ENCODE measurements at regions of chr9 and their contacts with region 1.

Region 1: GRCh38 chr9:35116898-35117551 is 1.4 kb upstream of the ATOSB start:
- DNase-seq: peak; percentile 93
- ATAC-seq: peak; percentile 54
- H3K4me3 ChIP-seq: peak overlapping the region; percentile 55 to 72 (median 59)
- H3K4me3 Mint-ChIP-seq: peak overlapping the region; percentile 98
- H3K27ac ChIP-seq: peak overlapping the region in 1 of 2 donors; percentile 93
- H3K27ac Mint-ChIP-seq: peak overlapping the region; percentile 97
- H3K4me1 ChIP-seq: peaks cover 30 to 37% of the 10 kb centered on the region in 2 donors
- H3K4me1 Mint-ChIP-seq: peaks cover 40% of the 10 kb centered on the region
- H3K27me3 ChIP-seq: no peaks in the 10 kb centered on the region
- H3K27me3 Mint-ChIP-seq: peaks cover 3% of the 10 kb centered on the region
- CTCF ChIP-seq: peak; percentile 94

Region 2: GRCh38 chr9:34899535-34900158 is 217.4 kb before region 1 on chr9:
- CTCF ChIA-PET with region 1: interaction called, 18 read pairs
- POLR2A ChIA-PET with region 1: no interaction called
- intact Hi-C with region 1: loop called (anchors 1 kb)
- DNase-seq: peak; percentile 85
- ATAC-seq: peak; percentile 97
- H3K4me3 ChIP-seq: no peak overlapping the region
- H3K4me3 Mint-ChIP-seq: no peak overlapping the region
- H3K27ac ChIP-seq: no peak overlapping the region
- H3K27ac Mint-ChIP-seq: no peak overlapping the region
- H3K4me1 ChIP-seq: no peaks in the 10 kb centered on the region
- H3K4me1 Mint-ChIP-seq: no peaks in the 10 kb centered on the region
- H3K27me3 ChIP-seq: peaks cover 0 to 11% (median 9%) of the 10 kb centered on the region in 4 experiments
- H3K27me3 Mint-ChIP-seq: peaks cover 31% of the 10 kb centered on the region
- CTCF ChIP-seq: peak; percentile 94

Region 3: DNA sequence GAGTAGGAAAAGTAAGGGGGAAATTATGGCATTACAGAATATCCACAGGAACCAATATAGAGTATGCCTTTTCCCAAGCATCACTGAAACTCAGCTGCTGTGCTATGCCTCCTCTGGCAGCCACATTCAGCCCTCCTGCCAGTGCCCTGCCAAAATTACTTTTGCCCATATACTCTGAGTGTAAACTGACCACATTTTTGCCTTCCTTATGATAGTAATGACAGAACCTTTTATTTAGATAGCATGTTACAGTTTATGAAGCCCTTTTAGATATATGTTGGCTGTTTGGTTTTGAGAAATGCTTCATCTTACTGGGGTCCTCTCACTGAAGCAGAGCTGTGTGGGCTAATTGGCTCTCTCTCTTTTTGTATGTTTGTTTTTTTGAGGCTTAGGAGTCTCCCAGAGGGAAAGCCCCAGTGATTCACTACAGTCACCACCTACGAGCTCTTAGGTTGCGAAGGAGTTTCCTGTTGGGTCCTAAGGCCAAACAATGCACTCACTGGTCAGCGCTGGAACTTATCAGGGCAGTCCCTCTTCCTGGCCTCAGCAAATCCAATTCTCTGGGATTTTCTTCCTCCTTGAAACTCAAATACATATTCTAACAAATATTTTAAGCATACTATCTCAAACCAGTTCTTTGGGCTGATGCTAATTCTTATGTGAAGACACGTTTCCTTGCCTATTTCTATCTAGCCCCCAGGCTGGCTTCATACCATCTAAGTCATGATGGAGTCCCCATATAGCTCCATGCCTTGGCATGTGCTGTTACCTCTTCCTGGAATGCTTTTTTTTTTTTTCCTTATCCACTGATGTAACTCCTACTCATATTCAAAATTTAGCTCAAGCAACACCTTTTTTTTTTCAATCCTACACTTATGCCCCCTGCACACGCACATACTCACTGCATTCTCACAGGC is 155.2 kb before region 1 on chr9:
- CTCF ChIA-PET with region 1: no interaction called
- POLR2A ChIA-PET with region 1: no interaction called
- intact Hi-C with region 1: no loop called
- DNase-seq: no peak
- ATAC-seq: no peak
- H3K4me3 ChIP-seq: no peak overlapping the region
- H3K4me3 Mint-ChIP-seq: no peak overlapping the region
- H3K27ac ChIP-seq: no peak overlapping the region
- H3K27ac Mint-ChIP-seq: no peak overlapping the region
- H3K4me1 ChIP-seq: peaks cover 9 to 10% of the 10 kb centered on the region in 2 donors
- H3K4me1 Mint-ChIP-seq: peaks cover 2% of the 10 kb centered on the region
- H3K27me3 ChIP-seq: peaks cover 0 to 62% (median 57%) of the 10 kb centered on the region in 4 experiments
- H3K27me3 Mint-ChIP-seq: peaks cover 65% of the 10 kb centered on the region
- CTCF ChIP-seq: no peak

Region 4: GRCh38 chr9:35079426-35080341 is 37.3 kb before region 1 on chr9 and contains the start of gene FANCG:
- CTCF ChIA-PET with region 1: interaction called, 4 read pairs
- POLR2A ChIA-PET with region 1: interaction called, 5 read pairs
- intact Hi-C with region 1: loop called (anchors 1 kb)
- DNase-seq: peak; percentile 88
- ATAC-seq: peak; percentile 93
- H3K4me3 ChIP-seq: peak within 1 kb of the TSS; percentile 75 to 93 (median 82)
- H3K4me3 Mint-ChIP-seq: peak within 1 kb of the TSS; percentile 92
- H3K27ac ChIP-seq: peak within 1 kb of the TSS; percentile 25 to 50
- H3K27ac Mint-ChIP-seq: peak within 1 kb of the TSS; percentile 84
- H3K4me1 ChIP-seq: peaks cover 12 to 16% of the 10 kb centered on the region in 2 donors
- H3K4me1 Mint-ChIP-seq: peaks cover 18% of the 10 kb centered on the region
- H3K27me3 ChIP-seq: no peaks in the 10 kb centered on the region
- H3K27me3 Mint-ChIP-seq: no peaks in the 10 kb centered on the region
- CTCF ChIP-seq: no peak
- total RNA-seq, gene FANCG: 38.9 and 40.1 TPM in 2 replicates

Region 5: DNA sequence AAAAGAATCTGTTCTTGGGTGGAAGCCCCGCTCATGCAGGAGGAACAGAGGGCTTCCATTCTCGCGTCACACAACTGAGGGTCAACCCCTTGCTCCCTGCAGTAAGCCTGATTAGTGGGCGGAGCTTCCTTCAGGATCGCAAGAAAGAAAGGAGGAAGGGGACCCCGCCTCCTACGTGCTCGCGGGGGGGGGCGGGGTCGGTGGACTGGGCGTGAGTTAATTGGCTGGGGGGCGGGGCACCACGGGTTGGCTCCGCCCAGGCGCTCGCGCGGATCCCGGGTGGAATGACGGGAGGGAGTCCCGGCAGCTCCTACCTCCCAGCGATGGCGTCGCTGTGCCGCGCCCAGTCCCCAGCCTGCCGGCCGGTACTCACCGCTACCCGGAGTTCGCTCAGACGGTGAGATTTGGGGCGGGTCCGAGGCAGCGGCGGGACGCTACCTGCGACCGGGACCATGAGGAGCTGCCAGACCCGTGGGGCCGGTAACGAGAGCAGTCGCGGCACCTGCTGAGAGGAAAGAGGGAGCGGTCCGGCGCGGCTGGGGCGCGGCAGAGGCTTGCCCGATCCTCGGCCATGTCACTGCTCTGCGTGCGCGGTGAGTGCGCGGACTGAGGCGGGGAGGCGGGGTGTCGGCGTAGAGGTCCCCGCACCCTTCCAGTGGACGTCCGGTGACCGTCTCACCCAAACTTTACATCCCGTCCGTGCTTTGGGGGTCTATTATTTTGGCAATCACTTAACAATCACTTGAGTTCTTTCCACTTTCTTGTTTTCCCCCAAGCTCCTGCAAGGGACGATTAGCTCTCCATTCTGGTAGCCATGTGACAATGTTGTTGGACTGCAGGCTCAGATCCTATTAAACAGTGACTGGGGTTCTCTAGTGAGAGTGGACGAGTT is 44.9 kb after region 1 on chr9 and contains the start of gene UNC13B:
- CTCF ChIA-PET with region 1: interaction called, 5 read pairs
- POLR2A ChIA-PET with region 1: no interaction called
- intact Hi-C with region 1: loop called (anchors 2 kb)
- DNase-seq: peak; percentile 83
- ATAC-seq: peak; percentile 97
- H3K4me3 ChIP-seq: peak within 1 kb of the TSS; percentile 39 to 89 (median 78)
- H3K4me3 Mint-ChIP-seq: peak within 1 kb of the TSS; percentile 89
- H3K27ac ChIP-seq: no peak within 1 kb of the TSS
- H3K27ac Mint-ChIP-seq: peak within 1 kb of the TSS; percentile 61
- H3K4me1 ChIP-seq: peaks cover 16 to 30% of the 10 kb centered on the region in 2 donors
- H3K4me1 Mint-ChIP-seq: peaks cover 28% of the 10 kb centered on the region
- H3K27me3 ChIP-seq: peaks cover 0 to 9% (median 4%) of the 10 kb centered on the region in 4 experiments
- H3K27me3 Mint-ChIP-seq: peaks cover 6% of the 10 kb centered on the region
- CTCF ChIP-seq: no peak
- total RNA-seq, gene UNC13B: 0.25 and 0.32 TPM in 2 replicates

Region 6: GRCh38 chr9:35179347-35180287 is 62.6 kb after region 1 on chr9:
- CTCF ChIA-PET with region 1: no interaction called
- POLR2A ChIA-PET with region 1: no interaction called
- intact Hi-C with region 1: no loop called
- DNase-seq: no peak
- ATAC-seq: no peak
- H3K4me3 ChIP-seq: no peak overlapping the region
- H3K4me3 Mint-ChIP-seq: no peak overlapping the region
- H3K27ac ChIP-seq: no peak overlapping the region
- H3K27ac Mint-ChIP-seq: no peak overlapping the region
- H3K4me1 ChIP-seq: no peaks in the 10 kb centered on the region
- H3K4me1 Mint-ChIP-seq: no peaks in the 10 kb centered on the region
- H3K27me3 ChIP-seq: peaks cover 0 to 3% (median 0%) of the 10 kb centered on the region in 4 experiments
- H3K27me3 Mint-ChIP-seq: peaks cover 7% of the 10 kb centered on the region
- CTCF ChIP-seq: no peak

Region 7: DNA sequence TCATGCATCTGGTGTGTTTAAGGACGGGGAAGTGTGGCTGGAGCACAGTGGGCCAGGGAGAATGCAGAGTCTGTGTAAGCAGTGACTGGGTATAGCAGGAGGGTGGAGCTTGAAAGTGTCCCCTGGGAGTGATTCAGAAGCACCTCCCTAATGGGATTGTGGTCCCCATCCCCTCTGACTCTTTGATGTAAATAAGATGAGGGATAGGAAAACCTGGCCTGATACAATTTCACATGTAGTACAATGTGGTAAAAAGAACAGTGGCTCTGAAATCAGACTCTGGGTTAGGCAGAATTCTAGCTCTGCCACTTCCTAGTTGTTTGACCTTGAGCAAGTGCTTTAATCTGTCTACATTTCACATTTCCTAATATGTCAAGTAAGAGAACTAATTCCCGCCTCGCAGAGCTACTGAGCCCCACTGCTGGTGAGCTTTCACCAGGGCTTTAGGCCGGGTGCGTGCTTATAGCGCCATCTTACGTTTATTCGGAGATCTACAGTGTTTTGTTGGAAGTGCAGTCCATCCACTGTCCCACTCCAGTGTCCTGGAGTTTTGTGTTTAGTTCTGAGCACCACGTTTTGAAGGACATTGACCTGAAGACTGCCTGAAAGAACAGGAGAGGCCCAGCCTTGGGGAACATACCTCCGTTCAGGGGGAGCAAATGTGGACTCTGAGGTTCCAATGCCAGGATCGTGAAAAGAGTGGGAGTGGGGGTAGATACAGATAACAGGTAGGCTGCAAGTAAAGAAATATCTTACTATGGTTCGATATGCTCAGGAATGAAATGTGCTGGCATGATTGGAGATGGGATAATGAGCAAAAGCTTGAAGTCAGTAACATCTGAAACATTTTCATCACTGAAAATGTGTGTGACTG is 436.9 kb after region 1 on chr9:
- CTCF ChIA-PET with region 1: interaction called, 7 read pairs
- POLR2A ChIA-PET with region 1: no interaction called
- intact Hi-C with region 1: loop called (anchors 5 kb)
- DNase-seq: peak; percentile 37
- ATAC-seq: peak; percentile 36
- H3K4me3 ChIP-seq: no peak overlapping the region
- H3K4me3 Mint-ChIP-seq: no peak overlapping the region
- H3K27ac ChIP-seq: no peak overlapping the region
- H3K27ac Mint-ChIP-seq: no peak overlapping the region
- H3K4me1 ChIP-seq: peaks cover under 1 to 1% of the 10 kb centered on the region in 2 donors
- H3K4me1 Mint-ChIP-seq: peaks cover 1% of the 10 kb centered on the region
- H3K27me3 ChIP-seq: no peaks in the 10 kb centered on the region
- H3K27me3 Mint-ChIP-seq: no peaks in the 10 kb centered on the region
- CTCF ChIP-seq: peak; percentile 60

Region 8: GRCh38 chr9:35657546-35658136 is 540.6 kb after region 1 on chr9 and contains the start of gene RMRP:
- CTCF ChIA-PET with region 1: no interaction called
- POLR2A ChIA-PET with region 1: no interaction called
- intact Hi-C with region 1: loop called (anchors 5 kb)
- DNase-seq: peak; percentile 97
- ATAC-seq: peak; percentile 79
- H3K4me3 ChIP-seq: peak within 1 kb of the TSS; percentile 84 to 93 (median 87)
- H3K4me3 Mint-ChIP-seq: peak within 1 kb of the TSS; percentile 94
- H3K27ac ChIP-seq: peak within 1 kb of the TSS; percentile 99 to 100
- H3K27ac Mint-ChIP-seq: peak within 1 kb of the TSS; percentile 97
- H3K4me1 ChIP-seq: peaks cover 39 to 62% of the 10 kb centered on the region in 2 donors
- H3K4me1 Mint-ChIP-seq: peaks cover 66% of the 10 kb centered on the region
- H3K27me3 ChIP-seq: no peaks in the 10 kb centered on the region
- H3K27me3 Mint-ChIP-seq: no peaks in the 10 kb centered on the region
- CTCF ChIP-seq: no peak
- total RNA-seq, gene RMRP: 7,890 and 7,920 TPM in 2 replicates

Region 9: GRCh38 chr9:36036780-36037548 is 919.9 kb after region 1 on chr9 and contains the start of gene RECK:
- CTCF ChIA-PET with region 1: no interaction called
- POLR2A ChIA-PET with region 1: no interaction called
- intact Hi-C with region 1: loop called (anchors 10 kb)
- DNase-seq: peak; percentile 88
- ATAC-seq: peak; percentile 98
- H3K4me3 ChIP-seq: peak within 1 kb of the TSS; percentile 52 to 82 (median 74)
- H3K4me3 Mint-ChIP-seq: peak within 1 kb of the TSS; percentile 88
- H3K27ac ChIP-seq: peak within 1 kb of the TSS in 1 of 2 donors; percentile 55
- H3K27ac Mint-ChIP-seq: peak within 1 kb of the TSS; percentile 76
- H3K4me1 ChIP-seq: peaks cover 19 to 21% of the 10 kb centered on the region in 2 donors
- H3K4me1 Mint-ChIP-seq: peaks cover 25% of the 10 kb centered on the region
- H3K27me3 ChIP-seq: peaks cover 0 to 3% (median 0%) of the 10 kb centered on the region in 4 experiments
- H3K27me3 Mint-ChIP-seq: no peaks in the 10 kb centered on the region
- CTCF ChIP-seq: no peak
- total RNA-seq, gene RECK: 7.7 and 7.9 TPM in 2 replicates

Measured in B cell (primary cell).